Activated naive CD8-positive, alpha-beta T cell treated with anti-CD3 and anti-CD28 coated beads, Interleukin-2, amount 10 ng/mL, durations not matched to agents 7 days and 5 days (primary cell): ENCODE measurements at regions of chr21 and their contacts with region 1.

Region 1: GRCh38 chr21:44011980-44012527 is at the start of gene TRAPPC10:
- DNase-seq: peak; percentile 94
- ATAC-seq: peak; percentile 62
- H3K4me3 Mint-ChIP-seq: peak within 1 kb of the TSS; percentile 87
- H3K27ac Mint-ChIP-seq: peak within 1 kb of the TSS; percentile 89
- H3K4me1 Mint-ChIP-seq: peaks cover 45% of the 10 kb centered on the region
- H3K27me3 Mint-ChIP-seq: no peaks in the 10 kb centered on the region
- total RNA-seq, gene TRAPPC10: 77.9 to 82.7 TPM

Region 2: DNA sequence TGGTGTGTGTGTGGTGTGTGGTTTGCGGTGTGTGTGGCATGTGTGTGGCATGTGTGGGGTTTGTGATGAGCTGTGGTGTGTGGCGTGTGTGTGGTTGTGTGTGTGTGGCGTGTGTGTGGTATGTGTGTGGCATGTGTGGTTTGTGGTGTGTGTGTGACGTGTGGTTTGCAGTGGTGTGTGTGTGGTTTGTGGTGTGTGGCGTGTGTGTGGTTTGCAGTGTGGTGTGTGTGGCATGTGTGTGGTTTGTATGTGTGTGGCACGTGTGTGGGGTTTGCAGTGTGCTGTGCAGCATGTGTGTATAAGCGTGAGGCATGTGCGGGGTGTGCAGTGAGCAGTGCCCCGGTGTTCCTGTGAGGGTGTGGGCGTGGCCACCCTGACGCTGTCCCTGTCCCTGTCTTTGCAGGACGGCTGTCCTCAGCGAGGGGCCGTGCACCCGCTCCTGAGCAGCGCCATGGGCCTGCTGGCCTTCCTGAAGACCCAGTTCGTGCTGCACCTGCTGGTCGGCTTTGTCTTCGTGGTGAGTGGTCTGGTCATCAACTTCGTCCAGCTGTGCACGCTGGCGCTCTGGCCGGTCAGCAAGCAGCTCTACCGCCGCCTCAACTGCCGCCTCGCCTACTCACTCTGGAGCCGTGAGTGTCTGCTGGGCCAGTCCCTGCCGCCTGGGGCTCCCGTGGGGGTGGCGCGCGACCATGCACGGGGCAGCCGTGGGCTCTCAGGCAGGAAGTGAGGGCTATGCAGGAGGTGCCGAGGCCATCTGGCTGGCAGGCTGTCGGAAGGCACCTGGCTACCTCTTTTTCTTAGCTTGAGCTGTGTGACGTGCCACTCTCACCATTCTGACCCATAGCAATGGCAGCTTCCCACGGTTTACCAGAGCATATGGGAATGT is 52.6 kb before region 1 on chr21:
- POLR2A ChIA-PET with region 1: no interaction called
- DNase-seq: peak; percentile 50
- ATAC-seq: peak; percentile 37
- H3K4me3 Mint-ChIP-seq: no peak overlapping the region
- H3K27ac Mint-ChIP-seq: no peak overlapping the region
- H3K4me1 Mint-ChIP-seq: peaks cover 7% of the 10 kb centered on the region
- H3K27me3 Mint-ChIP-seq: no peaks in the 10 kb centered on the region

Region 3: GRCh38 chr21:43971201-43971991 is 40.7 kb before region 1 on chr21:
- POLR2A ChIA-PET with region 1: no interaction called
- DNase-seq: no peak
- ATAC-seq: no peak
- H3K4me3 Mint-ChIP-seq: no peak overlapping the region
- H3K27ac Mint-ChIP-seq: no peak overlapping the region
- H3K4me1 Mint-ChIP-seq: peaks cover 11% of the 10 kb centered on the region
- H3K27me3 Mint-ChIP-seq: no peaks in the 10 kb centered on the region

Region 4: GRCh38 chr21:44065428-44065827 is 53.4 kb after region 1 on chr21:
- POLR2A ChIA-PET with region 1: interaction called, 13 read pairs
- DNase-seq: peak; percentile 68
- ATAC-seq: peak; percentile 99
- H3K4me3 Mint-ChIP-seq: peak overlapping the region; percentile 81
- H3K27ac Mint-ChIP-seq: peak overlapping the region; percentile 97
- H3K4me1 Mint-ChIP-seq: peaks cover 30% of the 10 kb centered on the region
- H3K27me3 Mint-ChIP-seq: no peaks in the 10 kb centered on the region

Region 5: DNA sequence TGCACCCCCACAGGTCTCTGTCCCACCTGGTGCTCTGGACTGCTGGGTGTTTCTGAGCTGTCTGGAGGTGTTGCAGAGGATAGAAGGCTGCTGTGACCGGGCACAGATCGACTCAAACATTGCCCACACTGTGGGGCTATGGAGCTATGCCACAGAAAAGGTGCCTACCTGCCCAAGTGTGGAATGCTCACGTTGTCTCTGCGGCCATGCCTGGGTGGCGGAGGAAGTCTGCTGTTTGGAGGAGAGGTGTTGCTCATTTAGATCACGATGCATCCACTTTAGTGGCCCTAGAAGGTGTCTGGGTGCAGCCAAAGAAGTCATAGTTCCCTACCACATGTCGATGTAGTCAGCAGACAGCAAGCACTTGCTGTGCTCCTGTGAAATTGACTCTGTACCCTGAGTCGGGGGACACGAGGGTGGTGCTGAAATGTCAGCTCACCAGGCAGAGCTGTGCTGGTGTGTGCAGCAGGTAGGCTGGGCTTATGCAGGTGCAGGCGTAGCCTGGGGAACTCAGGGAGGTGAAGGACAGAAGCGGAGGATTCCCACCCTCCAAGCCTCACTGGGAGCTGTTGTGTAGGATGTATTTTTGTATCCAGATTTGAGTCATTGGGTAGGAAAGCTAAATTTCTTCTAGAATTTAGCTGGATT is 62.4 kb after region 1 on chr21:
- POLR2A ChIA-PET with region 1: interaction called, 13 read pairs
- DNase-seq: no peak
- ATAC-seq: peak; percentile 21
- H3K4me3 Mint-ChIP-seq: no peak overlapping the region
- H3K27ac Mint-ChIP-seq: peak overlapping the region; percentile 24
- H3K4me1 Mint-ChIP-seq: peaks cover 36% of the 10 kb centered on the region
- H3K27me3 Mint-ChIP-seq: no peaks in the 10 kb centered on the region

Region 6: GRCh38 chr21:44083631-44084291 is 71.7 kb after region 1 on chr21:
- POLR2A ChIA-PET with region 1: interaction called, 51 read pairs
- DNase-seq: peak; percentile 76
- ATAC-seq: peak; percentile 75
- H3K4me3 Mint-ChIP-seq: peak overlapping the region; percentile 83
- H3K27ac Mint-ChIP-seq: peak overlapping the region; percentile 92
- H3K4me1 Mint-ChIP-seq: peaks cover 76% of the 10 kb centered on the region
- H3K27me3 Mint-ChIP-seq: no peaks in the 10 kb centered on the region

Region 7: DNA sequence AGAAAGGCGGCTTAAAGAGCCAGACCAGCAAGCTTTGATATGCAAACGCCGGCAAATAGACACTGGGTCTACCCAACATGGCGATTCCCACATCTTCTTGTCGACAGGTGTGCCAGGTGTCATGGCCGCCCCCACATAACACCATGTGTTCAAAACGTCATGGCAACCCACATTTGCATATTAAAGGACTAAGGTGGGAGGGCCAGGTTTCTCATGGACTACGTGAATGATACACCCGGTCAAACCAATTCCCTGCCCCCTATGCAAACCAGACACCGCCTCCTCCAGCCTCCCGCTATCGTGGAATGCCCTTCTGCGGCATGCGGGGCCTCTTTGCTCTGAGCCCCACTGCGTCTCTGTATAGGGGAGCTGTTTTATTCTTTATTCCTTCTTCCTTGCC is 187.4 kb after region 1 on chr21:
- POLR2A ChIA-PET with region 1: no interaction called
- DNase-seq: no peak
- ATAC-seq: no peak
- H3K4me3 Mint-ChIP-seq: no peak overlapping the region
- H3K27ac Mint-ChIP-seq: no peak overlapping the region
- H3K4me1 Mint-ChIP-seq: no peaks in the 10 kb centered on the region
- H3K27me3 Mint-ChIP-seq: no peaks in the 10 kb centered on the region